ENCODE measurements at regions of chr5 and their contacts with region 1.

Region 1: DNA sequence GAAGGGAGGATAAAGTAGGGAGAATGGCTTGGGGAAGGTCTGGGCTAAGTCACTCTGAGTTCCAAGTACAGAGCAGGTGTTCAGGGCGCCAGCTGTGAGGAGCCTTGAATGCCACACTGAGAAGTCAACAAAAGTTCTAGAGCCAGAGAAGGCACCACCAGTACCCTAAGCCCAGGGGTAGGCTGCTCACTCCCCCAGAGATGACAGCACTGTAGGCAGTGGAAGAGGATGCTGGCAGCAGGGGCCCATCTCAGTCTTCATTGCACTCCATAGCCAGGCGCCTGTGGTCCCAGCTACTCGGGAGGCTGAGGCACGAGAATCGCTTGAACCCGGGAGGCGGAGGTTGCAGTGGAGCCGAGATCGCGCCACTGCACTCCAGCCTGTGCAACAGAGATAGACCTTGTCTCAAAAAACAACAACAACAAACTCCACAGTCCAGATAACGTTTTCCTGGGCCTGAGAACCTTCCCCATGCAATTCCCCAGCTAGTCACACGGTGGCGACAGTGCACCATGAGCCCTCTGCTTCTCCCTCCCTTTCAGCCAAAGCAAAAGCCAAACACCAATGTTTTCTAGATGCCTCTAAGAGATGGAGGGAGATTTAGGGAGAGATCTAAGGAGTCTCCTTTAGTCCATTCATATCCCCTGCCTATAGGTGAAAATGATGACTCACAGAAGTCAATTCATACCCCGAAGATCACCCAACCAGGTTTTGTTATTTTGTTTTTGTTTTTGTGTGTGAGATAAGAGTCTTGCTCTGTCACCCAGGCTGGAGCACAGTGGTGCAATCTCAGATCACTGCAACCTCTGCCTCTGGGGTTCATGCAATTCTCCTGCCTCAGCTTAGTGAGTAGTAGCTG is 19.8 kb upstream of the NSD1 start:
- DNase-seq: peak; percentile 93

Region 2: DNA sequence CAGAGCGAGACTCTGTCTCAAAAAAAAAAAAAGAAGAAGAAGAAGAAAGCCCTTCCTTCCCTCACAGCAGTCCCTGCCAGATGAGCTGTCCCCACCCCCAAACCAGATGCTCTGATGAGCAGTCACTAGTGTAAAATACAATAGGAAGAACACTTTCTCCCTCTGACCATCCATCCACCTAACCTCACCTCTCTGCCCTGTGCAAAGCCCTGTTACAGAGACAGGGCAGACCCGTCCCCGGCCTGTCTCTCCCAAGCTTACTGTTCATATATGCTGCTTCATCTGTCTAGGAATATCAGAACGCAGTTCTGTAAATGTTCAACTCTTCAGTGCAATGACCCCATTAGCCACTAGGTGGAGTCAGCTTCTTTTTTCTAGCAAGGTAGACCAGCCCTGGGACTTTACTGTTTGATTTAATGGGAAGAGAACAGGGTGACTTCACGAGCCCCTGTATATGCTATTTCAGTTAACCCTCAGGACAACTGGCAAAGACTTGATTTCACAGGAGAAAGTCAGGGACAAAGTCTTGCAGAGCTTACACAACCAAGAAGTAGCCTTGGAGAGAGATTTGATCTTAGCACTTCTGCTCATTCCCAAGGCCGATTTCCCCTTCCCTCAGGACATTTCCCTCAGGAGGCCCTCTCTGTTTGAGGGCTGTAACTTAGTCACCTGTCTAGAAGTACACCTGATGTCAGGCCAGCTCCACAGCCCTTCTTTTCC is 42.0 kb before region 1 on chr5:
- CTCF ChIA-PET with region 1: interaction called, 71 read pairs
- POLR2A ChIA-PET with region 1: interaction called, 6 read pairs
- DNase-seq: peak; percentile 79

Region 3: GRCh38 chr5:177126771-177127170 is 13.0 kb after region 1 on chr5:
- CTCF ChIA-PET with region 1: interaction called, 12 read pairs
- POLR2A ChIA-PET with region 1: no interaction called
- DNase-seq: no peak

Region 4: DNA sequence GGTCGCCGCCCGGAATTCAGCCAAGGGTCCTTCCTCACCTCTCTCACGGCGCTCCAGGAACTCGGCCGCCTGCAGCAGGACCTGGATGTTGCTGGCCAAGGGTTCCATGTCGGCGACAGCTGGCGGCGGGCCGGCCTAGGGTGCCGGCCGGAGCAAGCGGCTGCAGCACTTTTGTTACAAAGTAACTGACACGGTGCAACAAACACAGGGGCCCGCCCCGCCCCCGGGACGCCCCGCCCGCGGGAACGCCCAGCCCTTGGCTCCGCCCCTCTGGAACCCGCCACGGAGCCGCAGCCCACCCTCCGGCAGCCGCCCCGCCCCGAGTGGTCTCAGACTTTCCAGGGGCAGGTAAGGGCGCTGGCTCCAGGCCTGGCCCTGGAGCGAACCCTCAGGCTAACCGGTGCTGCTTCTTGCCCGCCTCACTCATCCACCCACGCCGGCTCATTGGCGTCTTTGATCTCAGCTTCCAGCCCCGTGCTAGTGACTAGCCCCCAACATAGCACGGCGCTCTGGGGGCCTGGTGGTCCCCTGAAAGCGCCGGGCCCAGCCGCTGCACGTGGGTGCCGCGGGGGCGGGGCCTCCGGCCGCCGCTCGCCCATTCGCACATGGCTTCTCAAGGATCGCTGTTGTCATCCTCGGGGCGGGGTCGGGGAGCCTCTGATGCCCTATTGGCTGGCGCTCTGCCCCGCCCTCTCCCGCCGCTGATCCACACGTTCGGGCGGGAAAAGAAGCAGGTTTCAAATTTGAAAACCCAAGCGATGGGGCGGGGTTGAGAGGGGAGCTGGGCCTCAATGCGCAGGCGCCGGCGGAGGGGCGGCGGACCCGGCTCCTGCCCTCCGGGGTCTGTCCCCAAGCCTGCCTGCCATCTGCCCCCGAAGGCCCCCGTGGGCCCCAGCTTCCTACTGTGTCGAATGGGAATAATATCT is 198.2 kb after region 1 on chr5 and contains the start of gene MXD3:
- CTCF ChIA-PET with region 1: interaction called, 13 read pairs
- POLR2A ChIA-PET with region 1: interaction called, 3 read pairs
- DNase-seq: peak; percentile 98

Measured in HEK293T (cell line).